Activated naive CD4-positive, alpha-beta T cell treated with anti-CD3 and anti-CD28 coated beads for 36 hours (primary cell): ENCODE measurements at regions of chr19 and their contacts with region 1.

Region 1: GRCh38 chr19:29999490-29999889 is 57.5 kb downstream of the URI1 start:
- DNase-seq: no peak
- H3K4me3 Mint-ChIP-seq: no peak overlapping the region
- H3K27ac Mint-ChIP-seq: no peak overlapping the region
- H3K4me1 Mint-ChIP-seq: peaks cover 54% of the 10 kb centered on the region
- H3K27me3 Mint-ChIP-seq: no peaks in the 10 kb centered on the region

Region 2: DNA sequence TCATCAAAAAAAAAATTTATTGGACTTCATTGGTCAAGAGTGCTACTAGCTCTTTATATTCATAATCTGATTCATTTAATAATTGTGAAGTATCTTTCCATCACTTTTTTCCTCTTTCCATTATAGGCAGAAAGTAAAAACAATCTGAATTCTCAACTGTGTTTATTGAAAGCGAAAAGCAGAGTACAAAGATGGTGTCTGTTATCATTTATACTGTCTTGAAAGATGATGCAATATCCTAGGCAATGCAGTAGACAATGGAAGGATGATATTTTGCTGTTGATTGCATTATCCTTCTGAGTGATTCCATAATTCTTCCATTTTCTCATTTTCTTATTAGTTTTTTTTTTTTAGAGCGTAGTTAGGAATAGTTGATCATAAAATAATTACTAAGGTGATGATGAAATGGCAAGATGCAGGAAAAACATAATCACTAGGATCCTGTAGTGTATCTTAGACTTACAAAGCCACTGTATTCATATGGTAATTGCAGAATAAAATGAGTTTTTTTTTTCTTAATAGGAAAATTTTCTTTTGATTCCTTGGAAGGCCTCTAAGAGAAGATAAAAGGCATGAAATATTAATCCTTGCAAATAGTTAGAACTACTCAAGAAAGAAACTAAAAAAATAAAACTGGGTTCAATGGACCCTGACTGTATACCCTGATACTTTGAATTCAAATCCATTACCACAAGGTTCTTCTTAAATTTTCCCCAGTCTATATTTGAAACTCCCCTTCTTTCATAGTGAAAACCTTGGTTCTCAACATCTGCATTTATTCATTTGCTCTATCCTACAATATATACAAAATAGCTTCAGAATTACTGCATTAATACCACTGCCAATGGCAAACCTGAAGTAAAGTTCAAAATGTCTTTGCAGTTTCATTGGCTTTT is 45.9 kb before region 1 on chr19:
- CTCF ChIA-PET with region 1: no interaction called
- intact Hi-C with region 1: loop called (anchors 5 kb)
- DNase-seq: no peak
- H3K4me3 Mint-ChIP-seq: no peak overlapping the region
- H3K27ac Mint-ChIP-seq: peak overlapping the region; percentile 85
- H3K4me1 Mint-ChIP-seq: peaks cover 58% of the 10 kb centered on the region
- H3K27me3 Mint-ChIP-seq: no peaks in the 10 kb centered on the region

Region 3: DNA sequence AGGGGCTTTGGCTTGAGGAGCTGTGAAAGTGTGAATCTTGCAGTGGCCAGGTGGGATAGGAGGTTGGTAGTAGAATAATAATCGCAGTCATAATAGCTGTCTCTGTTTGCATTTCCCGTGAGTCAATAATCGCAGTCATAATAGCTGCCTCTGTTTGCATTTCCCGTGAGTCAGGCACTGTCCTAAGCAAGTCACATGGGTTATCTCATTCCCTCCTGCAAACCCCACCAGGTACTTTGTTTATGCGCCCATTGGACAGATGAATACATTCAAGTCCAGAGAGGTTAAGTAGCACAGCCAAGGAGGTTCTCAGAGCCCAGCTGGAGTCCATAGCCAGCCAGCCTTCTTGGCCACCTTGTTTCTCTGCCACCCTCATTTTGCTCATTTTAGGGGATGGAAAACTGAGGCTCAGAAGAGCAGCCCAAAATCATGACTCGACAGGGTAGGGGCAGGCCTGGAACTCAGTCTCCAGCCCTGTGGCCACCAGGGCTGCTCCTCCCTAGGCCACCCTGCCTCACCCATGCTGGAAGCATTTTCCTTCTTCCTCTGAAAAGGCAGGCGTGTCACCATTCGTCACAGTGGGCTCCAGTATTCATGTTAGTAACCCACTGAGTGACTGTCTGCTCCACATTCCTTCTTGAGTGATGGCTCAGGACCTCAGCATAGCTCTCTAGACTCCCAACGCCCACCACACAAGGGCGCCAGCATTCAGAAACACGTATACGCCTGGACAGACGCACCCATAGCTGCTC is 148.7 kb after region 1 on chr19:
- CTCF ChIA-PET with region 1: no interaction called
- intact Hi-C with region 1: no loop called
- DNase-seq: no peak
- H3K4me3 Mint-ChIP-seq: no peak overlapping the region
- H3K27ac Mint-ChIP-seq: no peak overlapping the region
- H3K4me1 Mint-ChIP-seq: no peaks in the 10 kb centered on the region
- H3K27me3 Mint-ChIP-seq: no peaks in the 10 kb centered on the region